ENCODE measurements at regions of chr5 and their contacts with region 1.

Region 1: GRCh38 chr5:94968507-94969095 is 316.3 kb downstream of the MCTP1 start:
- DNase-seq: no peak
- H3K4me3 ChIP-seq: no peak overlapping the region
- H3K27ac ChIP-seq: no peak overlapping the region
- H3K4me1 ChIP-seq: no peaks in the 10 kb centered on the region
- H3K27me3 ChIP-seq: no peaks in the 10 kb centered on the region
- CTCF ChIP-seq: peak in 2 of 3 experiments; percentile 72 to 81; a peak in 3 of 4 replicates
- EP300 ChIP-seq: no peak
- POLR2A ChIP-seq: no peak
- RAD21 ChIP-seq: peak; percentile 90 to 92

Region 2: GRCh38 chr5:95178046-95178651 is 209.5 kb after region 1 on chr5:
- CTCF ChIA-PET with region 1: interaction called, 29 read pairs
- POLR2A ChIA-PET with region 1: no interaction called
- DNase-seq: peak; percentile 70 to 71
- H3K4me3 ChIP-seq: no peak overlapping the region; a peak in 2 of 8 replicates
- H3K27ac ChIP-seq: peak overlapping the region; percentile 68
- H3K4me1 ChIP-seq: peaks cover 3 to 23% (median 13%) of the 10 kb centered on the region in 4 experiments; a peak in 6 of 7 replicates
- H3K27me3 ChIP-seq: no peaks in the 10 kb centered on the region
- CTCF ChIP-seq: peak; percentile 51 to 86 (median 79)
- EP300 ChIP-seq: peak; percentile 32 to 94
- POLR2A ChIP-seq: no peak
- RAD21 ChIP-seq: peak; percentile 74 to 85

Region 3: GRCh38 chr5:95251185-95251584 is 282.6 kb after region 1 on chr5:
- CTCF ChIA-PET with region 1: interaction called, 22 read pairs
- POLR2A ChIA-PET with region 1: no interaction called
- DNase-seq: no peak
- H3K4me3 ChIP-seq: no peak overlapping the region
- H3K27ac ChIP-seq: no peak overlapping the region
- H3K4me1 ChIP-seq: no peaks in the 10 kb centered on the region
- H3K27me3 ChIP-seq: no peaks in the 10 kb centered on the region
- CTCF ChIP-seq: no peak
- EP300 ChIP-seq: no peak
- POLR2A ChIP-seq: no peak
- RAD21 ChIP-seq: no peak

Region 4: DNA sequence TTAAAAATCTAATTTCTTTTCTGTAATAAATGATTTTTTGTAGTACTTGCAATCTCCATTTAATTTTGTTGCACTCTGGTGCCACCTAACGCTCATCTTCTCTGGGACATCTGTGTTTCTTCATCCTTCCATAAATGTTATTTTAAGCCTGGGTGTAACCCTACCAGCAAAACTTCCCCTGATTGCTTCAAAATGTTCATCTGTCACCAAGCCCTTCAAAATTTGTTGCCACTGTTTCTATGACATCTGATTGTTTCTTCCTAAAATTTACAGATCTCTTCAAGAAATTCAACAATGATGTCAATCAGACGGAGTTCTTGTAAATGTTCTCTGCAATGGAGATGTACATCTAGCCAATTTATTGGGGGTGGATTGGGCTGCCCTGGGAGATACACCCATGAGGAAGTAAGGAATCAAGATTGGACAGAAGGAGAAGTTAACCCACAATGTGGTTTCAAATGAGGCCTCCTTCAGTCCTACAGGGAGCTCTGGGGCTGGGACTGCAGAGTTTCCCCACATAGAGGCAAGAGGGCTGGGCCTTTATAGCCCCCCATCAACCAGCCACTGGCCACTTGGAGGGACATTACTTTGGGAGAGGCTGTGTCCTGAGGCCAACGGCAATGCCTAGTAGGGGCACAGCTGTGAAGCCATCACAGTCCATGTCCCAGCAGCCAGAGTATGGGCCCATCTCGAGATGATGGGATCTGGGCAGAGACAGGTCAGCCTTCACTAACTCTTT is 293.0 kb after region 1 on chr5:
- CTCF ChIA-PET with region 1: interaction called, 20 read pairs
- POLR2A ChIA-PET with region 1: no interaction called
- DNase-seq: no peak
- H3K4me3 ChIP-seq: no peak overlapping the region
- H3K27ac ChIP-seq: no peak overlapping the region
- H3K4me1 ChIP-seq: no peaks in the 10 kb centered on the region
- H3K27me3 ChIP-seq: no peaks in the 10 kb centered on the region
- CTCF ChIP-seq: peak in 2 of 3 experiments; percentile 4 to 12; a peak in 2 of 4 replicates
- EP300 ChIP-seq: no peak
- POLR2A ChIP-seq: no peak
- RAD21 ChIP-seq: peak; percentile 55 to 65

Measured in H1 (cell line).